ENCODE measurements at regions of chr2 and their contacts with region 1.

Region 1: GRCh38 chr2:151828143-151828889 is at the start of gene ARL5A:
- DNase-seq: peak; percentile 91 to 97
- H3K4me3 ChIP-seq: peak within 1 kb of the TSS; percentile 88 to 98 (median 92)
- H3K27ac ChIP-seq: peak within 1 kb of the TSS; percentile 85
- H3K4me1 ChIP-seq: peaks cover 0 to 17% (median 9%) of the 10 kb centered on the region in 4 experiments; a peak in 5 of 7 replicates
- H3K27me3 ChIP-seq: no peaks in the 10 kb centered on the region
- CTCF ChIP-seq: no peak
- EP300 ChIP-seq: no peak
- POLR2A ChIP-seq: peak; percentile 89 to 93
- RAD21 ChIP-seq: no peak
- total RNA-seq, gene ARL5A: 74.8 and 86.3 TPM in 2 replicates

Region 2: GRCh38 chr2:151817929-151818328 is 10.4 kb before region 1 on chr2:
- CTCF ChIA-PET with region 1: interaction called, 4 read pairs
- POLR2A ChIA-PET with region 1: interaction called, 21 read pairs
- DNase-seq: no peak
- H3K4me3 ChIP-seq: no peak overlapping the region
- H3K27ac ChIP-seq: no peak overlapping the region
- H3K4me1 ChIP-seq: no peaks in the 10 kb centered on the region
- H3K27me3 ChIP-seq: no peaks in the 10 kb centered on the region
- CTCF ChIP-seq: no peak
- EP300 ChIP-seq: no peak
- POLR2A ChIP-seq: no peak
- RAD21 ChIP-seq: no peak

Region 3: DNA sequence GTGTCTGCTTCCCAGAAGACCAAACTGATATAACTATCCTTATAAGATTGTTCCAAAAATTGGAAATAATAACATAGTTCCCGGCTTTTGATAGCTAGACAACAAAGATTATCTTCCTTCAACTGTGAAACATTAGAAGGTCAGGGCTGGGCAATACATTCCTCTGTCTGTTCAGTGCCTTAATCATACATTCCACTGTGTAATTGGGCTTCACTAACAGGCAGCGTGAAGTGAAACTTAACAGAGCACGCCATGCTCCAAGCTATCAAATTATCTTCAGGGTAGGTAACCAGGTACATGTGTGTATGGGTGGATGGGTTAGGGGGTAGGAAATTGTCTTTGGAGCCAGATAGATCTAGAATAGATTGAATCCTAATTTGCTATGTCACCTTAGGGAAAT is 23.4 kb after region 1 on chr2:
- CTCF ChIA-PET with region 1: no interaction called
- POLR2A ChIA-PET with region 1: interaction called, 12 read pairs
- DNase-seq: no peak
- H3K4me3 ChIP-seq: no peak overlapping the region
- H3K27ac ChIP-seq: no peak overlapping the region
- H3K4me1 ChIP-seq: no peaks in the 10 kb centered on the region
- H3K27me3 ChIP-seq: no peaks in the 10 kb centered on the region
- CTCF ChIP-seq: no peak
- EP300 ChIP-seq: no peak
- POLR2A ChIP-seq: no peak
- RAD21 ChIP-seq: no peak

Region 4: DNA sequence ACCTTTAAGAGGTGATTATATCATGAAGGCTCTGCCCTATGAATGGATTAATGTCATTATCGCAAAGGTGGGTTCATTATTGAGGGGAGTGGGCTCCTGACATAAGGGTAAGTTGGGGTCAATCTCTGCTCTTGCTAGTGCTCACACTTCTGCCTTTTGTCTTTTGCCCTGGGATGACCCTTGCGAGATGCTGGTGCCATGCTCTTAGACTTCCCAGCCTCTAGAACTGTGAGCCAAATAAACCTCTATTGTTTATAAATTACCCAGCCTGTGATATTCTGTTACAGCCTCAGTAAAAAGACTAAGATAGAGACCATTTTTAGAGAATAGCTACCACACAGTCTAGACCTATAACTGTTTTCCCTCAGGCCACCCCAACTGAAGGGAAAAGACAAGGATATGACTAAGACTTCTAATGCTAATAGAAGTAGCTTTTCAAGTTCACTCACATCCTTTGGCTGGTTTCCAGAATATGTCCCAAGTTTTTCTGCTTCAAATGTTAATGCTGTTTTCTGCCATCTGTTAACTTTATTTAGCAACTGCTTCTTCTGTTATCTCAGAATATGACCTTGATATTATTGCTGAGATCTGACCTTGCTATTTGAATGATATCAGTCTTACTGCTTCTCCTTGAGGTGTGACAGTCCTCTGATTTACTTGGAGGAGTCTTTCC is 412.4 kb after region 1 on chr2:
- CTCF ChIA-PET with region 1: no interaction called
- POLR2A ChIA-PET with region 1: no interaction called
- DNase-seq: no peak
- H3K4me3 ChIP-seq: no peak overlapping the region
- H3K27ac ChIP-seq: no peak overlapping the region
- H3K4me1 ChIP-seq: no peaks in the 10 kb centered on the region
- H3K27me3 ChIP-seq: no peaks in the 10 kb centered on the region
- CTCF ChIP-seq: no peak
- EP300 ChIP-seq: no peak
- POLR2A ChIP-seq: no peak
- RAD21 ChIP-seq: no peak

Measured in H1 (cell line).